ENCODE measurements at regions of chr22 and their contacts with region 1.

Region 1: GRCh38 chr22:17057959-17058814 is 26.6 kb upstream of the IL17RA start:
- DNase-seq: peak in 4 of 5 donors; percentile 28 to 44 (median 33)
- H3K4me3 ChIP-seq: no peak overlapping the region
- H3K4me3 Mint-ChIP-seq: no peak overlapping the region
- H3K27ac ChIP-seq: no peak overlapping the region
- H3K27ac Mint-ChIP-seq: peak overlapping the region in 2 of 7 donors; percentile 56 to 74
- H3K4me1 ChIP-seq: no peaks in the 10 kb centered on the region
- H3K4me1 Mint-ChIP-seq: peaks cover 0 to 5% (median 3%) of the 10 kb centered on the region in 4 donors
- H3K27me3 ChIP-seq: no peaks in the 10 kb centered on the region
- H3K27me3 Mint-ChIP-seq: peaks cover 6 to 12% of the 10 kb centered on the region in 2 donors

Region 2: GRCh38 chr22:16917144-16918003 is 140.8 kb before region 1 on chr22:
- CTCF ChIA-PET with region 1: interaction called, 36 read pairs
- POLR2A ChIA-PET with region 1: no interaction called
- intact Hi-C with region 1: no loop called
- DNase-seq: peak in 4 of 5 donors; percentile 14 to 28 (median 25)
- H3K4me3 ChIP-seq: no peak overlapping the region
- H3K4me3 Mint-ChIP-seq: no peak overlapping the region
- H3K27ac ChIP-seq: no peak overlapping the region
- H3K27ac Mint-ChIP-seq: no peak overlapping the region
- H3K4me1 ChIP-seq: no peaks in the 10 kb centered on the region
- H3K4me1 Mint-ChIP-seq: peaks cover 0 to 2% (median 0%) of the 10 kb centered on the region in 4 donors
- H3K27me3 ChIP-seq: no peaks in the 10 kb centered on the region
- H3K27me3 Mint-ChIP-seq: peaks cover 20 to 29% of the 10 kb centered on the region in 2 donors

Region 3: GRCh38 chr22:17047656-17048055 is 10.5 kb before region 1 on chr22:
- CTCF ChIA-PET with region 1: interaction called, 19 read pairs
- POLR2A ChIA-PET with region 1: no interaction called
- intact Hi-C with region 1: no loop called
- DNase-seq: no peak
- H3K4me3 ChIP-seq: no peak overlapping the region
- H3K4me3 Mint-ChIP-seq: no peak overlapping the region
- H3K27ac ChIP-seq: no peak overlapping the region
- H3K27ac Mint-ChIP-seq: no peak overlapping the region
- H3K4me1 ChIP-seq: no peaks in the 10 kb centered on the region
- H3K4me1 Mint-ChIP-seq: no peaks in the 10 kb centered on the region
- H3K27me3 ChIP-seq: no peaks in the 10 kb centered on the region
- H3K27me3 Mint-ChIP-seq: peaks cover 3 to 7% of the 10 kb centered on the region in 2 donors

Region 4: GRCh38 chr22:17095538-17095937 is 37.4 kb after region 1 on chr22:
- CTCF ChIA-PET with region 1: no interaction called
- POLR2A ChIA-PET with region 1: no interaction called
- intact Hi-C with region 1: no loop called
- DNase-seq: no peak
- H3K4me3 ChIP-seq: no peak overlapping the region
- H3K4me3 Mint-ChIP-seq: peak overlapping the region in 3 of 8 donors; percentile 22 to 49 (median 33)
- H3K27ac ChIP-seq: no peak overlapping the region
- H3K27ac Mint-ChIP-seq: peak overlapping the region in 5 of 7 donors; percentile 55 to 86 (median 65)
- H3K4me1 ChIP-seq: peaks cover 94% of the 10 kb centered on the region
- H3K4me1 Mint-ChIP-seq: peaks cover 68 to 100% (median 84%) of the 10 kb centered on the region in 4 donors
- H3K27me3 ChIP-seq: no peaks in the 10 kb centered on the region
- H3K27me3 Mint-ChIP-seq: no peaks in the 10 kb centered on the region

Region 5: DNA sequence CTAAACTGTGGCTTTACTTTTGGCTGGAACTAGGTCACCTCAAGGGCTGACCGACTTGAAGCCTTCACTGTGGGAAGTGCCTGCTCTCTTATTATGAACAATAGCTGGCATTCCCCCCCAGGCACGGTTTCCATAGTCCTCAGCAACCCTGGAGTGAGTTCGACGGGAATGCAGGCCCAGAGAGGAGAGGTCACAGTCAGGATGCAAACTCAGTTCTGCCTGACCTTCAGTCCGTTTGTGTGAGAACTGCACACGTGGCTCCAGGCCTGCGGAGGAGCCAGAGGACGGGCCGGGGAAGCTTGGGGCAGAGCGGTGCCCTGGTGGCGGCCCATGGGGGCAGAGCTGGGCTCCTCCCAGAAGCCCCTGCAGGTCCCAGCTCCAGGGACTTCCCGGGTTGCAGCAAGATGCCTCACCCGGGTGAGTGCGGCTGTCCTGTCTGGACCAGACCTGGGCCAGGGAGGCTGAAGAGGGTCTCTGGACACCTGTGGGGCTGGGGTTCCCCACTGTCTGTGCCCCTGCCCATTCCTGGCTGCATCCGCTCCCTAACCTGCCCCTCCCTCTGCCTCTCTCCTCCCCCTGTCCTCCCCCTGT is 522.3 kb after region 1 on chr22:
- CTCF ChIA-PET with region 1: no interaction called
- POLR2A ChIA-PET with region 1: no interaction called
- intact Hi-C with region 1: no loop called
- DNase-seq: no peak
- H3K4me3 ChIP-seq: no peak overlapping the region
- H3K4me3 Mint-ChIP-seq: no peak overlapping the region
- H3K27ac ChIP-seq: no peak overlapping the region
- H3K27ac Mint-ChIP-seq: no peak overlapping the region
- H3K4me1 ChIP-seq: no peaks in the 10 kb centered on the region
- H3K4me1 Mint-ChIP-seq: no peaks in the 10 kb centered on the region
- H3K27me3 ChIP-seq: no peaks in the 10 kb centered on the region
- H3K27me3 Mint-ChIP-seq: peaks cover 1 to 7% of the 10 kb centered on the region in 2 donors